ENCODE measurements at regions of chr15 and their contacts with region 1.

Region 1: GRCh38 chr15:40893733-40894688 is at the start of gene VPS18:
- DNase-seq: peak; percentile 100
- ATAC-seq: peak; percentile 99
- H3K4me3 Mint-ChIP-seq: peak within 1 kb of the TSS; percentile 88
- H3K27ac Mint-ChIP-seq: peak within 1 kb of the TSS; percentile 86
- H3K4me1 Mint-ChIP-seq: peaks cover 29% of the 10 kb centered on the region
- H3K27me3 Mint-ChIP-seq: no peaks in the 10 kb centered on the region
- total RNA-seq, gene VPS18: 6.2 TPM

Region 2: GRCh38 chr15:40513609-40514008 is 380.4 kb before region 1 on chr15:
- CTCF ChIA-PET with region 1: no interaction called
- POLR2A ChIA-PET with region 1: no interaction called
- intact Hi-C with region 1: loop called in 1 of 2 experiments (anchors 2 kb)
- DNase-seq: no peak
- ATAC-seq: no peak
- H3K4me3 Mint-ChIP-seq: no peak overlapping the region
- H3K27ac Mint-ChIP-seq: no peak overlapping the region
- H3K4me1 Mint-ChIP-seq: peaks cover 7% of the 10 kb centered on the region
- H3K27me3 Mint-ChIP-seq: peaks cover 38% of the 10 kb centered on the region

Region 3: DNA sequence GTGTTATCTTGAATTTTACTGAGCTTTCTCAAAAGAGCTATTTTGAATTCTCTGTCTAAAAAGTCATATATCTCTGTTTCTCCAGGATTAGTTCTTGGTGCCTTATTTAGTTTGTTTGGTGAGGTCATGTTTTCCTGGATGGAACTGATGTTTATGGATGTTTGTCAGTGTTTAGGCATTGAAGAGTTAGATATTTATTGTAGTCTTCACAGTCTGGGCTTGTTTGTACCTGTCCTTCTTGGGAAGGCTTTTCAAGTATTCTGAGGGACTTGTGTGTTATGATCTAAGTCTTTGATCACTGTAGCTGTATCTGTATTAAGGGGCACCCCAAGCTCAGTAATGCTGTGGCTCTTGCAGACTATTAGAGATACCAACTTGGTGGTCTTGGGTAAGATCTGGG is 209.6 kb before region 1 on chr15:
- CTCF ChIA-PET with region 1: interaction called, 4 read pairs
- POLR2A ChIA-PET with region 1: no interaction called
- intact Hi-C with region 1: loop called (anchors 1 kb)
- DNase-seq: no peak
- ATAC-seq: no peak
- H3K4me3 Mint-ChIP-seq: no peak overlapping the region
- H3K27ac Mint-ChIP-seq: no peak overlapping the region
- H3K4me1 Mint-ChIP-seq: no peaks in the 10 kb centered on the region
- H3K27me3 Mint-ChIP-seq: no peaks in the 10 kb centered on the region

Region 4: GRCh38 chr15:40754883-40755811 is 138.9 kb before region 1 on chr15 and contains the start of gene RMDN3:
- CTCF ChIA-PET with region 1: no interaction called
- POLR2A ChIA-PET with region 1: no interaction called
- intact Hi-C with region 1: loop called in 1 of 2 experiments (anchors 1 kb)
- DNase-seq: peak; percentile 97
- ATAC-seq: peak; percentile 92
- H3K4me3 Mint-ChIP-seq: peak within 1 kb of the TSS; percentile 91
- H3K27ac Mint-ChIP-seq: peak within 1 kb of the TSS; percentile 99
- H3K4me1 Mint-ChIP-seq: peaks cover 27% of the 10 kb centered on the region
- H3K27me3 Mint-ChIP-seq: no peaks in the 10 kb centered on the region
- total RNA-seq, gene RMDN3: 12.3 to 18.8 TPM

Region 5: GRCh38 chr15:40799523-40799922 is 94.5 kb before region 1 on chr15:
- CTCF ChIA-PET with region 1: no interaction called
- POLR2A ChIA-PET with region 1: no interaction called
- intact Hi-C with region 1: no loop called
- DNase-seq: no peak
- ATAC-seq: no peak
- H3K4me3 Mint-ChIP-seq: no peak overlapping the region
- H3K27ac Mint-ChIP-seq: no peak overlapping the region
- H3K4me1 Mint-ChIP-seq: peaks cover 35% of the 10 kb centered on the region
- H3K27me3 Mint-ChIP-seq: no peaks in the 10 kb centered on the region

Region 6: DNA sequence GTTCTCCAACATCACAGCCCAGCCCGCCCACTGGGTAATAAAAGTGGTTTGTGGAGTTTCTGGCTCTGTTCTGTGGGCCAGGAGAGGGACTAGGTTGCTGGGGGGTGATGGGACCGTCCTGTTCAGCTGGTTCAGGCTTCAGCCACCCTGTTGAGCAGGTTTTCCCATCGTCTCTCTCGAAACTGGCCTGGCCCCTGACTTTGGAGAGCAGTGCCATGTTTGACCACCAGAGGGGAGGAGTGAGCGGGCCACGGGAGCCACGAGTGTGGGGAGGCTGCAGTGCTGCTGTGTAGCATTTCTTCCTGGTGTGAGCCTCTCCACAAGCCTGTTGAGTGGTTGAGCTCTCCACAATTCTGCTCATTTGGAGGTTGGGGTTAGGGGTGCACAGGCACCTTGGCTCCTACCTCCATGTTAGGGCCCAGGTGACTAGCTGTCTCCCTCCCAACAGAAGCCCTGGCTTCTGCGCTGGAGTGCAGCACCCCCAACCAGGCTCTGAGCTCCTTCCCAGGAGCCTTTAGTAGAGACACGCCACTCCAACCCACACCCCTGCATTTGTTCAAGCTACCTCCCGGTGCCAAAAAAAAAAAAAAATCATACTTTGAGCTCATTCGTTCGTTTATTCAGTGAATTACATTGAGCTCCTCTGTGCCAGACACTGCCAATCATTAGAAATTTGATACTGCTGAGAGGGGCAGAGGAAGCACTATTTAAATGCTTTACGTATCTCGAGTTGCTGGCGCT is 36.2 kb before region 1 on chr15:
- CTCF ChIA-PET with region 1: interaction called, 268 read pairs
- POLR2A ChIA-PET with region 1: interaction called, 19 read pairs
- intact Hi-C with region 1: loop called (anchors 1 kb)
- DNase-seq: peak; percentile 89
- ATAC-seq: peak; percentile 94
- H3K4me3 Mint-ChIP-seq: no peak overlapping the region
- H3K27ac Mint-ChIP-seq: no peak overlapping the region
- H3K4me1 Mint-ChIP-seq: peaks cover 3% of the 10 kb centered on the region
- H3K27me3 Mint-ChIP-seq: no peaks in the 10 kb centered on the region

Region 7: DNA sequence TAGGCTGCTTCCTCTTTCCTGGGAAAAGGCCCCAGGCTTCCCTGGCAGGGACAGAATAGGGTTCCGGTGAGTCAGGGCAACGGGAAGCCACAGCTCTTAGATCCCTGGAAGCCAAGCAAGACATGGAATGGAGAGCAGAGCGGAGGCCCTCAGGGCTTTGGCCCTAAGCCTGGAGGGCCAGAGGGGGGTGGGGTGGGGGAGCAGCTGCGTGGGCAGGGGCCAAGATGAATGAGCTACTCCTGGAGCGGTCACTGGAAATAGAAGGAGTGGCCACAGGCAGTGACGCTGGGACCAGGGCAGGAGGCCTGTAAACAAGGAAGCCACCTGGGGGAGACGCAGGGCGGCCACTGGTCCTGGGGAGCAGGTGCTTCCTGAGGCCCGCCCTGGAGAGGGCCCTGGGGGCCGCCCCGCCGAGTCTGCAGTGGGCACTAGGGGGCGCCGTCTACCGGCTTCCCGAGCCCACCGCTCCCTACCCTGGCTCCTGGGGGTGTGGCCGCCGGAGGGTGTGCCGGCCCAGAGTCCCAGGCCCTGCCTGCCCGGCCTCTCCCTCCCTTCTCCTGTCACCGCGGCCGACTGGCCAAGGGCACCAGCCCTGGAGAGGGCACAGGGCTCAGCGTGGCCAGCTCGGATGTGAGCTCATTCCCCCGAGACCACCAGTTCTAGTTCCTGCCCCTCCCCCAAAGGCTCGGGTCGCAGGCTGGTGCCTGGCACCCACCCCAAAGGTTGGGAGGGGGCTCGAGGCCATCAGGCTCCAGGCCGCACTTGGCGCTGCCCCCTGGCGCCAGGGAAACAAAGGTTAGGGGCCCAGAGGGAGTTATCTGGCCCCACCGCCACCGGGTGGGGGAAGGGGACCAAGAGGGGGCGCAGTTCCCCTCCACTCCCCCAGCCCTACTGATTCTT is 12.3 kb after region 1 on chr15:
- CTCF ChIA-PET with region 1: interaction called, 81 read pairs
- POLR2A ChIA-PET with region 1: interaction called, 5 read pairs
- intact Hi-C with region 1: no loop called
- DNase-seq: peak; percentile 91
- ATAC-seq: peak; percentile 81
- H3K4me3 Mint-ChIP-seq: peak overlapping the region; percentile 69
- H3K27ac Mint-ChIP-seq: peak overlapping the region; percentile 82
- H3K4me1 Mint-ChIP-seq: peaks cover 27% of the 10 kb centered on the region
- H3K27me3 Mint-ChIP-seq: no peaks in the 10 kb centered on the region

Region 8: DNA sequence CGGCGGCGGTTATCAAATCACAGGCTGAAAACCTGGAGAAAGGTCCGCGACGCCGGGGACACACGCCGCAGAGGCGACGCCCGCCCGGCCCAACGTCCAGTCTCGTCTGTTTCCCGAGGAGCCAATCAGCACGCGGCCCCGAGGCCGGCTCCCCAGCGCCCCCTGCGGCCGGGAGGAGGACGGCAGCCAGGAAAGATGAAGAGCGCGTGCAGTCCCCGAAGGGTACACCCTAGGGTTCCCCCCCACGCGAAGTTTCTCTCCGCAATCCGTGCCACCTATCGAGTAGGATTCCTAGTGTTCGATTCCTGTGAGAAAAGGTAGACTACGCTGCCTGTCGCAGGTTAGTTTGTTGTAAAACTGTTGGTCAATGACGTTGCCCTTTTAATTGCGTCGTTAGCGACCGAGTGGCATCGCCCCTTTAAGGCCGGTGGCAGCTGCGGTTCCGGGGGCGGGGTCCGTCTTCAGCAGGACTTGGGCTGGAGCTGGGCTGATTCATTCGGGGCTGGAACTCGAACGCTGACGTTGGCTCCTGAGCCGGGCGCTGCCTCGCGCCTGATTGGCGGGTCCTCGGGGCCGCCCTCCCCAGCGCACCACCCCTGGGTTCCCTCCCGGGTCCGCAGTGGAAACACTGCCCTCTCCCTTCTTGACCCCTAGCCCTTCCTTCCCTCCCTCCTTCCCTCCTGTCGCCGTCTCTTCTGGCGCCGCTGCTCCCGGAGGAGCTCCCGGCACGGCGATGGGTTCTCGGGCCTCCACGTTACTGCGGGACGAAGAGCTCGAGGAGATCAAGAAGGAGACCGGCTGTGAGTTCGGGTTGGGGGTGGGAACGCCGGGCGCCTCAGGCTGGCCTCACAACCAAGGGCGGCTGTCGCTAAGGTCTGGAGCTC is 336.9 kb after region 1 on chr15 and contains the starts of genes CHP1 and EXD1:
- CTCF ChIA-PET with region 1: interaction called, 3 read pairs
- POLR2A ChIA-PET with region 1: no interaction called
- intact Hi-C with region 1: loop called in 1 of 2 experiments (anchors 1 kb)
- DNase-seq: peak; percentile 99
- ATAC-seq: peak; percentile 99
- H3K4me3 Mint-ChIP-seq: peak within 1 kb of the TSS; percentile 87
- H3K27ac Mint-ChIP-seq: peak within 1 kb of the TSS; percentile 86
- H3K4me1 Mint-ChIP-seq: peaks cover 29% of the 10 kb centered on the region
- H3K27me3 Mint-ChIP-seq: no peaks in the 10 kb centered on the region
- total RNA-seq, gene CHP1: 32.7 to 34.5 TPM
- total RNA-seq, gene EXD1: not detected

Measured in activated CD4-positive, alpha-beta T cell treated with anti-CD3 and anti-CD28 coated beads for 36 hours (primary cell).